ENCODE measurements at regions of chr14 and their contacts with region 1.

Region 1: GRCh38 chr14:20682435-20683124 is 1.8 kb upstream of the RNASE4 start:
- DNase-seq: peak; percentile 94
- ATAC-seq: peak; percentile 91

Region 2: GRCh38 chr14:20332788-20333493 is 349.6 kb before region 1 on chr14 and contains the start of gene CCNB1IP1:
- intact Hi-C with region 1: loop called (anchors 5 kb)
- DNase-seq: no peak
- ATAC-seq: peak; percentile 98
- total RNA-seq, gene CCNB1IP1: 41.0 TPM

Region 3: DNA sequence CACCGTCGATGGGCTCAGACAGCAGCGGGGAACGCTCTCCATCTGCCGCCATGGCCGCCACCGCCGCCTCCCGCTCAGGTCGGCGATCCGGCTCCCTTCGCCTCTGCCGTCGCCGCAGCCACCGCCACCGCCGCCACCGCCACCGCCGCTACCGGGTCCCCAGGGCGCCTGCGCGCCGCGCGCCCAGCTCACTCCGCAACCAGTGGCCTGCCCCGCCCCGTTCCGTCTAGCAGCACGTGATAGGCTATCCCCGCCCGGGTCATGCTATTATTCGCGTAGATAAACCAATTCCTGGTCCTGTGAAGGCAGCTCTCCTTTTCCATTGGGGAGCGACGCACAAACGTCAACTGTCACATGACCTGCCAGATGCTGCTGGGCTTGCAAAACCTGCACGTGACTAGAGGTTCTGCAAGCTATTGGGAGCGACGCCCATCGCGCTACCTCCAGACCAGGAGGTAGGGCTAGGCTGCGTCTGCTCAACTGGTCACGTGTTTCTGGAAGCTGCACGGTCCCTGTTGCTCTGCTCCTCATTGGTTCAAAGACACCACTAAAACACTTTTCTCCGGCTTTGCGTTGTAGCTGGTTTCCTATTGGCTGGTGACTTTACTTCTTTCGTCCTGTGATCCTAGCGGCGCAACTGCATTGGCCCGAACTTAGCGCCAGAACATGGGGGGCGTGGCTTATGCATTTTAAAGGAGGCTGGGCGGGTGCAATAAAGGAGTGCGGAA is 221.1 kb before region 1 on chr14 and contains the start of gene PIP4P1:
- intact Hi-C with region 1: loop called (anchors 5 kb)
- DNase-seq: peak; percentile 100
- ATAC-seq: peak; percentile 98
- total RNA-seq, gene PIP4P1: 17.2 TPM

Region 4: GRCh38 chr14:20624495-20625070 is 58.0 kb before region 1 on chr14:
- intact Hi-C with region 1: loop called (anchors 5 kb)
- DNase-seq: peak; percentile 80
- ATAC-seq: peak; percentile 59

Region 5: DNA sequence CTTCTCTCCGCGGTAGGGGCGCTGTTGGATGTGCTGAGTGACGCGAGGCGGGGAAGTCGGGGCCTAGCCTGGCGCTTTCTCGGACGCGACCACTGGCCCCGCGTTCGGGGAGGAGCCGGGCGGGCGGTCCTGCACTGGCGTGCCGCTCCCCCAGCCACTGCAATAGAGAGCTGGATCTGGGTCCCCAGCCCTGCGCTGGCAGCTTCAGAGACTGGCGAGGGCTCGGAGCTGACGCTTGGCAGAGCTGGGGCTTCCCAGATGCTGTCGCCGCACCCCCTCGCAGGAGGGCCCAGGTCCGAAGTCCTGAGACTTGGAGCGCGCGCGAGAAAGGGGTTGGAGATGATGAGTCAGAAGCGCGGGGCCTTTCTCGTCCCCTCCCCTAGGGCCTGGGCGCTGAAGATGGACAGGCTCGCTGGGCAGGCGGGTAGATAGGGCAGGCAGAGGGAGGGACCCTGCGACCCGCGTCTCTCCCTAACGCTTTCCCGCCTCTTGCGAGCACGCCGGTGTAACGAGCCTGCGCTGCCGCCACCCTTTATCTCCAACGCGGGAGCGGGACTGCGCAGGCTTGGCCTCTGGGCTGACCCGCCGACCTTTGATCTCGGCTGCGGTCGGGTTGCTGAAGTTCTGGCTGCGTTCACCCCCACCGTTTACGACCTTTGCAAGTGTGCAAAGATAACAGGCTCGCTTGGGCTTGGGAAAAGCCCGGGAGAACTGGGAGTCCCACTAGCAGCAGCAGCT is 421.3 kb after region 1 on chr14:
- intact Hi-C with region 1: loop called (anchors 5 kb)
- DNase-seq: peak; percentile 97
- ATAC-seq: peak; percentile 96

Measured in Right ventricle myocardium inferior (tissue), 1 donor.